ENCODE measurements at regions of chr21 and their contacts with region 1.

Region 1: DNA sequence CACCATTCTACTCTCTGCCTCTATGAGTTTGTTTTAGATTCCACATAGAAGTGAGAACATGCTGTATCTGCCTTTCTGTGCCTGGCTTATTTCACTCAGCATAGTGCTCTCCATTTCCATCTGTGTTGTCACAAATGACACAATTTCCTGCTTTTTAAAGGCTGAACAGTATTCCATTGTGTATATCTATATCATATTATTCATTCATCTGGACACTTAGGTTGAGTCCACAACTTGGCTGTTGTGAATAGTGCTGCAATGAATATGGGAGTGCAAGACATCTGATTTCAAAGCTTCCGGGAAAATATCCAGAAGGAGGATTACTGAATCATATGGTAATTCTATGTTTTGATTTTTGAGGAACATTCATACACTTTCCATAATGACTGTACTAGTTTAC is 20.1 kb upstream of the DONSON start:
- DNase-seq: no peak
- CTCF ChIP-seq: no peak

Region 2: GRCh38 chr21:33558777-33559421 is 49.7 kb before region 1 on chr21:
- CTCF ChIA-PET with region 1: interaction called, 15 read pairs
- POLR2A ChIA-PET with region 1: no interaction called
- DNase-seq: no peak
- CTCF ChIP-seq: no peak

Region 3: GRCh38 chr21:33588485-33589335 is 19.8 kb before region 1 on chr21 and contains the start of gene DONSON:
- CTCF ChIA-PET with region 1: interaction called, 100 read pairs
- POLR2A ChIA-PET with region 1: interaction called, 7 read pairs
- DNase-seq: peak; percentile 99
- CTCF ChIP-seq: no peak

Region 4: GRCh38 chr21:33598051-33598450 is 10.5 kb before region 1 on chr21:
- CTCF ChIA-PET with region 1: interaction called, 100 read pairs
- POLR2A ChIA-PET with region 1: interaction called, 4 read pairs
- DNase-seq: no peak
- CTCF ChIP-seq: no peak

Measured in GM10248 (cell line).